Activated CD4-positive, alpha-beta T cell treated with anti-CD3 and anti-CD28 coated beads for 36 hours (primary cell): ENCODE measurements at regions of chr17 and their contacts with region 1.

Region 1: DNA sequence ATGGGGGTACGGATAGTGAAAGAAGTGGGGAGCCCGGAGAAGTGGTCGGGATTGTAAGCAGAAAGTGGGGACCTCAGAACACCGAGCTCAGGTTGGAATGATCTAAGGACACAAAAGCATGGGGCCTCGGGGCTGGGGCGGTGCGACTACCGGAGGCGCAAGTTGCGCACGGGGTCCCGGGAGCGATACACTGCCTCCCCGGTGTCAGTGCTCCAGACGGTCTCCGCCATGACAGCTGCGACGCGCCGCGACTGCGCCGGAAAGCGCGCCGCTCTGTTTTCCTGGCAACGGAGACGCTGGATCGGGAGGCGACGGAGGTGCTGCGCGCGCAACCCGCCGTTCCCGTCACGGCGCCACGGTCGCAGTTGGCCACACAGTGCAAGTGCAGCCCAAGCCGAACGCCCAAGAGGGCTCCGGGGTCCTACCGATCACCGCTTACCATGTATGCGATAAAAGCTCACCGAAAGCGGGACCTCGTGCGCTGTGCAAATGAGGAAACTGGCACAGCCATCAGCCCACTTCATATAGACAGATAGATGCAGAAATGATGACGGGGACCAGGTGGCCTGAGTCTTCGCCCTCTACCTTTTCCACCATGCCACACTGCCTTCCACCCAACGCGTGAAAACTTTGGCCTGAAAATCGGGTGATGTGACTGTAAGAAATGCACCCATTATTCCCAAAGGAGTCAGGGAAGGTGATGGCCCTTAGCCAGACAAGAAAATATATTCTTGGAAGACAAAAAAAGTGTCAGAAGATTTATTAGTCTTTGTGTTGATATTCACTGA is at the start of gene MKS1:
- DNase-seq: peak; percentile 98
- ATAC-seq: peak; percentile 100
- H3K4me3 Mint-ChIP-seq: peak within 1 kb of the TSS; percentile 90
- H3K27ac Mint-ChIP-seq: peak within 1 kb of the TSS; percentile 86
- H3K4me1 Mint-ChIP-seq: peaks cover 22% of the 10 kb centered on the region
- H3K27me3 Mint-ChIP-seq: peaks cover 2% of the 10 kb centered on the region
- total RNA-seq, gene MKS1: 20.4 to 22.5 TPM

Region 2: GRCh38 chr17:57084802-57085447 is 1134.3 kb before region 1 on chr17 and contains the start of gene AKAP1:
- CTCF ChIA-PET with region 1: no interaction called
- POLR2A ChIA-PET with region 1: no interaction called
- intact Hi-C with region 1: loop called in 1 of 2 experiments (anchors 2 kb)
- DNase-seq: peak; percentile 97
- ATAC-seq: peak; percentile 96
- H3K4me3 Mint-ChIP-seq: peak within 1 kb of the TSS; percentile 81
- H3K27ac Mint-ChIP-seq: peak within 1 kb of the TSS; percentile 87
- H3K4me1 Mint-ChIP-seq: peaks cover 44% of the 10 kb centered on the region
- H3K27me3 Mint-ChIP-seq: no peaks in the 10 kb centered on the region
- total RNA-seq, gene AKAP1: 27.0 to 29.8 TPM

Region 3: GRCh38 chr17:58156839-58157803 is 62.1 kb before region 1 on chr17:
- CTCF ChIA-PET with region 1: no interaction called
- POLR2A ChIA-PET with region 1: interaction called, 7 read pairs
- intact Hi-C with region 1: loop called in 1 of 2 experiments (anchors 1 kb)
- DNase-seq: peak; percentile 78
- ATAC-seq: peak; percentile 90
- H3K4me3 Mint-ChIP-seq: peak overlapping the region; percentile 83
- H3K27ac Mint-ChIP-seq: peak overlapping the region; percentile 84
- H3K4me1 Mint-ChIP-seq: peaks cover 47% of the 10 kb centered on the region
- H3K27me3 Mint-ChIP-seq: no peaks in the 10 kb centered on the region

Region 4: GRCh38 chr17:58200017-58200633 is 19.1 kb before region 1 on chr17:
- CTCF ChIA-PET with region 1: interaction called, 16 read pairs
- POLR2A ChIA-PET with region 1: no interaction called
- intact Hi-C with region 1: no loop called
- DNase-seq: peak; percentile 79
- ATAC-seq: peak; percentile 95
- H3K4me3 Mint-ChIP-seq: no peak overlapping the region
- H3K27ac Mint-ChIP-seq: no peak overlapping the region
- H3K4me1 Mint-ChIP-seq: no peaks in the 10 kb centered on the region
- H3K27me3 Mint-ChIP-seq: no peaks in the 10 kb centered on the region

Region 5: GRCh38 chr17:58242171-58242784 is 23.1 kb after region 1 on chr17:
- CTCF ChIA-PET with region 1: interaction called, 3 read pairs
- POLR2A ChIA-PET with region 1: interaction called, 3 read pairs
- intact Hi-C with region 1: loop called in 1 of 2 experiments (anchors 1 kb)
- DNase-seq: peak; percentile 74
- ATAC-seq: peak; percentile 96
- H3K4me3 Mint-ChIP-seq: no peak overlapping the region
- H3K27ac Mint-ChIP-seq: no peak overlapping the region
- H3K4me1 Mint-ChIP-seq: peaks cover 5% of the 10 kb centered on the region
- H3K27me3 Mint-ChIP-seq: peaks cover 41% of the 10 kb centered on the region

Region 6: DNA sequence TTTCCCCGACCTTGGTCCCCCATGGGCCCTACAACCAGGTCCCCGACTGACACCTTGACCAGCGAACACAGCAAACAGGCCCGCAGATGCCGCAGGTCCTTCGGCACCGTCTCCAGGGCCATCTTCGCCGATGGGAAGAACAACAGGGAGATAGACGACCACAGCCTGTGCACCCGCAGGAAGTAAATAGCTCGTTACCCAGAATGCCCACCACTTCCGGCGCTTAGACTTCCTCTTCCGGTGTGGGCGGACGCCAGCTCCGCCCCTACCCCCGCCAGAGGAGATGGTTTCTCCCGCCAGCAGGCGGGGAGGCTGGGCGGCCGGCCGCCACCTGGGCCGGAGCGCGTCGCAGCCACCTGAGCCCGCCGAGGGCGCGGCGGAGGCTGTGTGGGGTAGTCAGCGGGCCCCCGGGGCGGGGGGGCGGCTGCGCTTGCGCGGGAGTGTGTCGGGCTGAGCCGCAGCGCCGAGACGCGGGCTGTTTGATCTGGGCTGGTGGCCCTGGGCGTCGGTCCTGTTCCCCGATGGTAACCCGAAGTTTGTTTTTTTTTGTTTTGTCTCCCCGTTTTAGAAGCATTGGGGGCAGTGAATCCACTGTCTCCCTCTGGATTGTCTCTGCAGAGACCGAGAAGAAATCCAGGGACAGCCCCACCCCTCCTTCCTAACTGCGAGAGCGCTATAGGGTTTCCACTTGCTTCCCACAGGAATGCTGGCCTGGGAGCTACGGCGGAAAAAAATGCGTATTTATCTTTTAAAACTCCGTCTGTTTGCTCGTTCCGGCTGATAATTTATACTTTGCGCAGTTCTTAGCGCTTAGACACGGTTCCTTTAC is 133.0 kb after region 1 on chr17 and contains the start of gene SUPT4H1:
- CTCF ChIA-PET with region 1: no interaction called
- POLR2A ChIA-PET with region 1: interaction called, 4 read pairs
- intact Hi-C with region 1: loop called in 1 of 2 experiments (anchors 1 kb)
- DNase-seq: peak; percentile 96
- ATAC-seq: peak; percentile 78
- H3K4me3 Mint-ChIP-seq: peak within 1 kb of the TSS; percentile 97
- H3K27ac Mint-ChIP-seq: peak within 1 kb of the TSS; percentile 98
- H3K4me1 Mint-ChIP-seq: peaks cover 38% of the 10 kb centered on the region
- H3K27me3 Mint-ChIP-seq: no peaks in the 10 kb centered on the region
- total RNA-seq, gene SUPT4H1: 106 to 129 TPM